Gastrocnemius medialis (tissue), 4 donors: ENCODE measurements at regions of chr5 and their contacts with region 1.

Region 1: DNA sequence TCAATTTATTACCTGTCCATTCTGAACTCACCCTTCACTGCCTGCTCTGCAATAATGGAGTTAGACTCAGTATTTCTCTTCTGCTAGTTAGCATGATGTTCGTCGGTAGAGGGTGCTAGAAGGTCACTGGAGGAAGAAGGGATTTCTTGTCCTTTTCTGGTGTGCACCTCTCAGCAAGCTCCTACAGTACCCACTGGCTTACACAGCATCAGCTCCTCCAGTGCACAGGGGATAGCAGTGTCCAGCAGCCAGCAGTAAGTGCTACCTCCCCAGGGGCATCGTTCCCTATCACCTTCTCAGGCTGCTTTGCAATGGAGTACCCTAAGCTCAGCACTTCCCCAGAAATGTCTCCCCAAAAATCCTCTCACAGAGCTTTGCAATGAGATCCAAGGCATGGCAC is 45.9 kb upstream of the APC start:
- DNase-seq: no peak
- ATAC-seq: no peak
- H3K4me3 ChIP-seq: no peak overlapping the region
- H3K27ac ChIP-seq: no peak overlapping the region
- H3K4me1 ChIP-seq: peaks cover 0 to 2% of the 10 kb centered on the region in 2 donors
- H3K27me3 ChIP-seq: no peaks in the 10 kb centered on the region
- CTCF ChIP-seq: peak in 1 of 5 experiments; percentile 19
- POLR2A ChIP-seq: no peak

Region 2: GRCh38 chr5:112312816-112313215 is 378.9 kb before region 1 on chr5:
- in situ Hi-C with region 1: no loop called
- intact Hi-C with region 1: no loop called
- DNase-seq: no peak
- ATAC-seq: no peak
- H3K4me3 ChIP-seq: no peak overlapping the region
- H3K27ac ChIP-seq: no peak overlapping the region
- H3K4me1 ChIP-seq: no peaks in the 10 kb centered on the region
- H3K27me3 ChIP-seq: no peaks in the 10 kb centered on the region
- CTCF ChIP-seq: no peak
- POLR2A ChIP-seq: no peak

Region 3: DNA sequence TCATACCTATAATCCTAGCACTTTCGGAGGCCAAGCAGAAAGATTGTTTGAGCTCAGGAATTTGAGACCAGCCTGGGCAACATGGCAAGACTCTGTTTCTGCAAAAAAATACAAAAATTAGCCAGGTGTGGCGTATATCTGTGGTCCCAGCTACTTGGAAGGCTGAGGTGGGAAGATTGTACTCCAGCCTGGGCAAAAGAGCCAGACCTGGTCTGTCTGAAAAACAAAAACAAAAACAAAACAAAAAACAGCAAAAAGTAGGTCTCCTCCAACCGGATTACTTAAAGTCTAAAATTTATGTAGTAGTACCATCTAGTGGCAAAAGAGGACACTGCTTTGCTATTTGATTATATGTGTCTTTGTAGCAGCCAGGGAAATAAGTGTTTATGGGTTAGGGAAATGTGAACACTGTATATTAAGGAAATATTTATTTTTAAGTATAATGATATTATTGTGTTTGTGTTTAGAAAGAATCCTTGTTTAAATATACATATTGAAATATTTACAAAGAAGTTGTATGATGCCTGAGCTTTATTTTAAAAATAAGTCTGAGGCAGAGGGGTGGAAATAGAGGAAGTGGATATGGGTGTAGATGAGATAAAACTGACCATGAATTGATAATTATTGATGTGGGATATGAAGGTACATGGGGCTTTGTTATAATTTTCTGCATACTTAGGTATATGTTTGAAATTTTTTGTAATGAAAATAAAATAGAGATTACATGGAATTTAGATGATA is 65.9 kb after region 1 on chr5:
- in situ Hi-C with region 1: no loop called
- intact Hi-C with region 1: loop called (anchors 1 kb)
- DNase-seq: no peak
- ATAC-seq: peak; percentile 80 to 90
- H3K4me3 ChIP-seq: peak overlapping the region in 2 of 4 donors; percentile 8 to 22
- H3K27ac ChIP-seq: peak overlapping the region in 3 of 4 donors; percentile 16 to 39 (median 34)
- H3K4me1 ChIP-seq: peaks cover 0 to 5% of the 10 kb centered on the region in 2 donors
- H3K27me3 ChIP-seq: no peaks in the 10 kb centered on the region
- CTCF ChIP-seq: peak; percentile 64 to 92 (median 80)
- POLR2A ChIP-seq: no peak

Region 4: DNA sequence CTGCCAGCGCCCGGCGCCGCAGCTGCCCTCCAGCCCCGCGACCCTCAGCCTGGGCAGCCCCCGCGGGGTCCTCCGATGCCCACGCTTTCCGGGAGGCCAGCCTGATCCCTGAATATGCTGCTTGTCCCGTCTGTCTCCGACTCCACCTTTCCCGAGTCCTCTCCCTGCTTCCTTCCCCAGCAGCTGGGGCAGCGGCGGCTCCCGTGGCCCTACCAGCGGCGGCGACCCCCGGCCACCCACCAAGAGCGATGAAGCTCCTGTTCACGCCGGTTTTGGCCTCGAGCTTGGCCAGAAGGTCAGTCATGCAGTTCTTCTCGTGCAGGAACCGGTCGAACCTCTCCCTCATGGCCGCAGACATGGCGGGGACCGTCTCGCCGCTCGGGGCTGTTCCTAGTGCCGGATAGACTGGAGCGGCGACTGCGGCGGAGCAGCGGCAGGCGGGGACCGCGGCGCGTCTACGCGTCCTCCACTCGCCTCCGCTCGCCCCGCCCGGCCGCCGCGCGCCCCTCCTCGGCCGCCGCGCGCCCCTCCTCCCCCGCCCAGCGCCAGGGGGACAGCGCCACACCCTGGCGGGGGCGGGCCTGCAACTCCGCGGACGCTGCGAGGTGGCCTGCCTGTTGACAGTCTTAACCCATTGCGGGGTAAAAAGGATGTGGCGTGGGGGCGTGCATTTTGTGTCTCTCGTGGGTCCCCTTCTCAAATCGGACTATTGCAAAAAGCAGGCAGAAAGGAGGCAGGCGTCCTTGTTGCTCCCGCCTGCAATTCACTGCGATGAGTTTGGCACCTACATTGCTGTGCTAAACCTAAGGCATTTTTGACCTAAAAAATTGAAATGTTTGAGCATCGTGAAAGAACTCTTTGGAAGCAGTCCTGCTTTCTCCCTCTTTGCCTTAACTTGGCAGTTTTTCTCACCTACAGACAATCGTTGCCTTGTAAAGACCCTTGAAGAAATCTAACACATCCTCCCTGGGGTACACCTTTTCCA is 230.4 kb after region 1 on chr5 and contains the start of gene REEP5:
- in situ Hi-C with region 1: no loop called
- intact Hi-C with region 1: no loop called
- DNase-seq: peak; percentile 66 to 80
- ATAC-seq: peak; percentile 80 to 83
- H3K4me3 ChIP-seq: peak within 1 kb of the TSS; percentile 65 to 100 (median 88)
- H3K27ac ChIP-seq: peak within 1 kb of the TSS; percentile 93 to 100 (median 98)
- H3K4me1 ChIP-seq: peaks cover 36 to 42% of the 10 kb centered on the region in 2 donors
- H3K27me3 ChIP-seq: no peaks in the 10 kb centered on the region
- CTCF ChIP-seq: peak; percentile 74 to 96 (median 90)
- POLR2A ChIP-seq: peak; percentile 84 to 89
- total RNA-seq, gene REEP5: 67.2 to 116 (median 89.9) TPM